ENCODE measurements at regions of chr6 and their contacts with region 1.

Region 1: GRCh38 chr6:111011360-111012142 is 29.7 kb downstream of the RPF2 start:
- DNase-seq: peak; percentile 11
- H3K4me3 ChIP-seq: no peak overlapping the region
- H3K27ac ChIP-seq: no peak overlapping the region
- H3K27me3 ChIP-seq: no peaks in the 10 kb centered on the region
- CTCF ChIP-seq: peak; percentile 74

Region 2: DNA sequence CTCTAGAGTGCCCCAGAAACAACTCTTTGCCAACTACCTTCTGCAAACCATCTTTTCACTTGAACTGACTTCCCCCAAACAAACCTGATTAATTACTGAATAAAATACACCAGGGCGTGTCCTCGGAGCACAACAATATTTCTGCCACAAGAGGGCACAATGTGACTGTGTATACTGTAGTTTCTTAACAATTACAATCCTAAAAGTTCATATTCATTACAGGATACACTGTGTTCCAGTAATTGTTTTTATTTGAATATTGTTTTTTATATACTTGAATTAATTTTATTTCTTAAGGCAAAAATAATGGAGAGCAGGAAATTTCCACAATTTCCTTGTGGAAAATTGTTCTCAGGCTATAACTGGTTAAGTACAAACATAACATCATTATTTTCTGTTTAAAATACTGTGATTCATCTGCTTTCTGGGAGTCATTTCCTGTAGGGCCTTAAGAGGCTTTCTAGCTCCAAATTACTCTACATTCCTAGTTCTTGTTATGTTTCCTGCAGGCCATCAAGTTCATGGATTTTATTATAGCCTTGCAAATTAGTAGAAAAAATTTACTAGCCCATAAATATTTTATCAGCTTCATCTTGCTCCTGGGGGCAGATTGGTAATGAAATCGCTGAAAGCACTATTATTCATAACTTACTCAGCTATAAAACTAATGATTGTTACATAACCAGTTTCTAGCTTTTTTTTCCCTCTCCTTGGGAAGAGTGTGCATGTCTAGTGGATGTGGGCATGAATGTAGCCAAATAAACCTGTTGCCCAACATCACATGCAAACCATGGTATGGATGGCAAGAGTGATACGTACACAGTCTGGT is 483.2 kb before region 1 on chr6:
- CTCF ChIA-PET with region 1: interaction called, 18 read pairs
- POLR2A ChIA-PET with region 1: no interaction called
- DNase-seq: no peak
- H3K4me3 ChIP-seq: no peak overlapping the region
- H3K27ac ChIP-seq: peak overlapping the region; percentile 69
- H3K27me3 ChIP-seq: no peaks in the 10 kb centered on the region
- CTCF ChIP-seq: peak; percentile 72

Region 3: GRCh38 chr6:110873981-110874879 is 137.3 kb before region 1 on chr6 and contains the start of gene AMD1:
- CTCF ChIA-PET with region 1: interaction called, 10 read pairs
- POLR2A ChIA-PET with region 1: no interaction called
- DNase-seq: peak; percentile 96
- H3K4me3 ChIP-seq: peak within 1 kb of the TSS; percentile 88
- H3K27ac ChIP-seq: peak within 1 kb of the TSS; percentile 96
- H3K27me3 ChIP-seq: no peaks in the 10 kb centered on the region
- CTCF ChIP-seq: no peak
- polyA plus RNA-seq, gene AMD1: 58.0 and 84.5 TPM in 2 replicates

Region 4: GRCh38 chr6:110990840-110991576 is 20.5 kb before region 1 on chr6:
- CTCF ChIA-PET with region 1: interaction called, 15 read pairs
- POLR2A ChIA-PET with region 1: no interaction called
- DNase-seq: no peak
- H3K4me3 ChIP-seq: no peak overlapping the region
- H3K27ac ChIP-seq: no peak overlapping the region
- H3K27me3 ChIP-seq: no peaks in the 10 kb centered on the region
- CTCF ChIP-seq: no peak

Region 5: GRCh38 chr6:111030008-111031007 is 18.8 kb after region 1 on chr6:
- CTCF ChIA-PET with region 1: interaction called, 30 read pairs
- POLR2A ChIA-PET with region 1: interaction called, 3 read pairs
- DNase-seq: no peak
- H3K4me3 ChIP-seq: no peak overlapping the region
- H3K27ac ChIP-seq: no peak overlapping the region
- H3K27me3 ChIP-seq: no peaks in the 10 kb centered on the region
- CTCF ChIP-seq: no peak

Region 6: GRCh38 chr6:111259089-111259831 is 247.7 kb after region 1 on chr6:
- CTCF ChIA-PET with region 1: interaction called, 16 read pairs
- POLR2A ChIA-PET with region 1: interaction called, 4 read pairs
- DNase-seq: peak; percentile 99
- H3K4me3 ChIP-seq: peak overlapping the region; percentile 88
- H3K27ac ChIP-seq: peak overlapping the region; percentile 91
- H3K27me3 ChIP-seq: no peaks in the 10 kb centered on the region
- CTCF ChIP-seq: peak; percentile 92

Measured in AG04450 (cell line).